Uterus (tissue), 4 donors: ENCODE measurements at regions of chr5 and their contacts with region 1.

Region 1: GRCh38 chr5:139787568-139788293 is 7.9 kb upstream of the PSD2 start:
- DNase-seq: peak; percentile 84 to 91
- H3K4me3 ChIP-seq: peak overlapping the region; percentile 35 to 51
- H3K27ac ChIP-seq: peak overlapping the region; percentile 40 to 58
- H3K4me1 ChIP-seq: no peaks in the 10 kb centered on the region
- H3K27me3 ChIP-seq: no peaks in the 10 kb centered on the region
- CTCF ChIP-seq: peak; percentile 85 to 98 (median 98)
- POLR2A ChIP-seq: no peak

Region 2: DNA sequence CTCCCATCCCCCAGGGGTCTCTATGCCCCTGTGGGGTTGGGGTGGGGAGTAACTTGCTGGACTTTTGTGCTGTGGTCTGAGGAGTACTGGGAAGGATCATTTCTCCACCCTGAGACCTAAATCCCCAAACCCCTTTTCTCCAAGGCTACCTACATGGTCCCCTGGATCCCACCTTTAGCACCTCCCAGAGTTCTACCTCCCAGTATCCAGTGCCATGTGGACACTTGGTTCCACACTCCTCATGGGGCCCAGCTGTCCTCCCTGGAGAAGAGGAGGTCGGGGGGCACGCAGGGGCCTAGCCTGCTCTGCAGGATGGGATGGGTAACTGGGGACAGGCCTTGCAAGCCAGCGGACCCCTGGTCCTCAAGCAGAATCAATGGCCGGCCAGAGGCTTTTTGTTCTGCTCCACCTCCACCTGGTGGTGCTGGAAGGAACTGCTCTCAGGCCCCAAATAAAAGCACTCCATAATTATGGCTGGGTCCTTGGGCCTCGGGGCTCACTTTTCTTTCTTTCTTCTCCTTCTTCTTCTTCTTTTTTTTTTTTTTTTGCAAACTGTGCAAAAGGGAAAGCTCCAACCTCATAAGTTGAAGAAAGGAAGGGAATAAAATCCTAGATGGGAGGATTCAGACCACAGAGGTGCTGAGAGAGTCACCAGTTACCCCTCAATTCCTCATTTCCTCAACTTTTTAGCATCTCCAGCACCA is 76.3 kb after region 1 on chr5:
- intact Hi-C with region 1: loop called (anchors 5 kb)
- DNase-seq: peak; percentile 61 to 71
- H3K4me3 ChIP-seq: no peak overlapping the region
- H3K27ac ChIP-seq: no peak overlapping the region
- H3K4me1 ChIP-seq: no peaks in the 10 kb centered on the region
- H3K27me3 ChIP-seq: no peaks in the 10 kb centered on the region
- CTCF ChIP-seq: peak; percentile 76 to 87 (median 84)
- POLR2A ChIP-seq: no peak

Region 3: GRCh38 chr5:140157032-140157803 is 369.5 kb after region 1 on chr5:
- intact Hi-C with region 1: loop called (anchors 10 kb)
- DNase-seq: peak; percentile 88 to 89
- H3K4me3 ChIP-seq: peak overlapping the region; percentile 6 to 20
- H3K27ac ChIP-seq: peak overlapping the region in 1 of 2 donors; percentile 59
- H3K4me1 ChIP-seq: peaks cover 0 to 3% of the 10 kb centered on the region in 2 donors
- H3K27me3 ChIP-seq: no peaks in the 10 kb centered on the region
- CTCF ChIP-seq: peak; percentile 92 to 95 (median 94)
- POLR2A ChIP-seq: no peak